PC-3 (cell line): ENCODE measurements at regions of chr1 and their contacts with region 1.

Region 1: GRCh38 chr1:48851638-48852037 is 74.9 kb upstream of the BEND5 start:
- DNase-seq: peak; percentile 9
- ATAC-seq: no peak
- H3K4me3 ChIP-seq: no peak overlapping the region
- H3K27ac ChIP-seq: no peak overlapping the region
- H3K4me1 ChIP-seq: peaks cover 22% of the 10 kb centered on the region
- H3K27me3 ChIP-seq: no peaks in the 10 kb centered on the region
- CTCF ChIP-seq: no peak

Region 2: DNA sequence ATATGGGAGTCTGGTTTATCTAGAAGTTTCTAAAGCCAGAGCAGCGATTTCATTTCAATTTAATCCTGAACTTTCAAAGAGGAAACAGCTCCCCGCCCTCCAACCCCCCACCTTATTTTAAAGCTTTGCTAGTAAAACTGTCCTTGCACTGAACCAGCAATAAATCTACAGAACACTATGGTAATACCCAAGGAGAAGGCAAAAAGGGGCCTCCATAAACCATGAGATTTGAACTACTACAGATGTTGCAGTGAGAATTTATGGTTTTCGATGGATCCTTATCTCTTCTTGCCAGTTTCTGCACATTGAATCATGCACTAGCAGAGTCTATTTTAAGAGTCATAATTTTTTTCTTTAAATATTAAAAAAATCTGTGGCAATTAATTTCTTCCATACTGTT is 10.2 kb before region 1 on chr1:
- CTCF ChIA-PET with region 1: no interaction called
- POLR2A ChIA-PET with region 1: no interaction called
- intact Hi-C with region 1: no loop called
- DNase-seq: no peak
- ATAC-seq: no peak
- H3K4me3 ChIP-seq: no peak overlapping the region
- H3K27ac ChIP-seq: no peak overlapping the region
- H3K4me1 ChIP-seq: no peaks in the 10 kb centered on the region
- H3K27me3 ChIP-seq: peaks cover 17% of the 10 kb centered on the region; the same call in 1 of the 2 replicates
- CTCF ChIP-seq: no peak

Region 3: GRCh38 chr1:48870596-48870995 is 19.0 kb after region 1 on chr1:
- CTCF ChIA-PET with region 1: no interaction called
- POLR2A ChIA-PET with region 1: interaction called, 17 read pairs
- intact Hi-C with region 1: no loop called
- DNase-seq: peak; percentile 46
- ATAC-seq: 0 out of 2 replicates have a peak, but pooled peaks have one; percentile 40
- H3K4me3 ChIP-seq: no peak overlapping the region
- H3K27ac ChIP-seq: no peak overlapping the region
- H3K4me1 ChIP-seq: no peaks in the 10 kb centered on the region
- H3K27me3 ChIP-seq: no peaks in the 10 kb centered on the region
- CTCF ChIP-seq: peak; percentile 86